ENCODE measurements at regions of chr11 and their contacts with region 1.

Region 1: DNA sequence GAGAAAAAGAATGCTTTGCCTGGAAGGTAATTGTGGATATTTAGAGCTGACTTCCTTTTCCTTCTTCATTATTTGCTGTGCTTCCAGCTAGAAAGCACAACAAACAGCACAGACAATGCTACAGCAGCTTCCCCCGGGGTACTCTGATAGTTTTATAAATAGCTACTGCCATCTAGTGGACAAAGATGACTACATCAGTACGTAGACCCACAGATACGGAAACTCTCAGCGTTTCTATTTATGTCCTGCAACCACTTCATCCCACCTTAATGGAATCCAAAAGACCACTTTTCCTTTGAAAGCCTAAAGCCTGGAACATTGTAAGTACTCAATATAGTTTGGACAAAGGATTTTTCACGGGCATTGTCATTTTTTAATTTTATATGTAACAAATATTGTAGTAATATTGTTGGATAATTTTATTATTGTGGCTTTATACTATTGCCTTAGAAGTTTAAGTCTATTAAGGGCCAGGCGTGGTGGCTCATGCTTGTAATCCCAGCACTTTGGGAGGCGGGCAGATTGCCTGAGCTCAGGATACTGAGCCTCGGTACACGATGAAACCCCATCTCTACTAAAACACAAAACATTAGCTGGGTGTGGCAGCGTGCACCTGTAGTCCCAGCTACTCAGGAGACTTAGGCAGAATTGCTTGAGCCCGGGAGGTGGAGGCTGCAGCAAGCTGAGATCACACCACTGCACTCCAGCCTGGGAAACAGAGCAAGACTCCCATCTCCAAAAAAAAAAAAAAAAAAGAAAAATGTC is 7.5 kb downstream of the HSPA8 start:
- DNase-seq: peak; percentile 52
- ATAC-seq: peak; percentile 45
- H3K4me3 Mint-ChIP-seq: no peak overlapping the region
- H3K27ac Mint-ChIP-seq: peak overlapping the region; percentile 61
- H3K4me1 Mint-ChIP-seq: peaks cover 43% of the 10 kb centered on the region
- H3K27me3 Mint-ChIP-seq: no peaks in the 10 kb centered on the region

Region 2: DNA sequence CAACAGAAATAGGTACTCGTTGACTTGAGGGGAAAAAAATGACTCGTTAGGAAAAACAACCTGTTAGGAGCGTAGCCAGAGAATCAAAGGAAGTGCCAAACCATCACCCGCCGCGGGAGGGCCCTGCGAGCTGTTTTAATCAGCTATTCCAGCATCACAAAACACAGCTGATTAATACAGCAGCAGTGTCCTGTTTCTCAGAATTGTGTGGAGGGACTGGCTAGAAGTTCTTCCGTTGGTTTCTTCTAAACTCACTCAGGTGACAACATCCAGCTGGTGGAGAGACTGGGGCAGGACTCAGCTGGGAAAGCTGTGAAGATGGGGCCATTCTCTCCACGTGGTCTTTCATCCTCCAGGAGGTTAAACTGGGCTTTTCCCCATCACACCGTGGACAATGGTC is 20.6 kb before region 1 on chr11:
- CTCF ChIA-PET with region 1: interaction called, 16 read pairs
- POLR2A ChIA-PET with region 1: no interaction called
- DNase-seq: no peak
- ATAC-seq: no peak
- H3K4me3 Mint-ChIP-seq: no peak overlapping the region
- H3K27ac Mint-ChIP-seq: no peak overlapping the region
- H3K4me1 Mint-ChIP-seq: peaks cover 7% of the 10 kb centered on the region
- H3K27me3 Mint-ChIP-seq: peaks cover 5% of the 10 kb centered on the region

Region 3: GRCh38 chr11:123069908-123070821 is 15.7 kb after region 1 on chr11:
- CTCF ChIA-PET with region 1: interaction called, 16 read pairs
- POLR2A ChIA-PET with region 1: interaction called, 129 read pairs
- DNase-seq: no peak
- ATAC-seq: peak; percentile 62
- H3K4me3 Mint-ChIP-seq: peak overlapping the region; percentile 88
- H3K27ac Mint-ChIP-seq: peak overlapping the region; percentile 98
- H3K4me1 Mint-ChIP-seq: peaks cover 63% of the 10 kb centered on the region
- H3K27me3 Mint-ChIP-seq: no peaks in the 10 kb centered on the region

Region 4: GRCh38 chr11:123272565-123272964 is 218.1 kb after region 1 on chr11:
- CTCF ChIA-PET with region 1: no interaction called
- POLR2A ChIA-PET with region 1: no interaction called
- DNase-seq: no peak
- ATAC-seq: no peak
- H3K4me3 Mint-ChIP-seq: no peak overlapping the region
- H3K27ac Mint-ChIP-seq: no peak overlapping the region
- H3K4me1 Mint-ChIP-seq: no peaks in the 10 kb centered on the region
- H3K27me3 Mint-ChIP-seq: peaks cover 4% of the 10 kb centered on the region